Body of pancreas (tissue), 4 donors: ENCODE measurements at regions of chr6 and their contacts with region 1.

Region 1: DNA sequence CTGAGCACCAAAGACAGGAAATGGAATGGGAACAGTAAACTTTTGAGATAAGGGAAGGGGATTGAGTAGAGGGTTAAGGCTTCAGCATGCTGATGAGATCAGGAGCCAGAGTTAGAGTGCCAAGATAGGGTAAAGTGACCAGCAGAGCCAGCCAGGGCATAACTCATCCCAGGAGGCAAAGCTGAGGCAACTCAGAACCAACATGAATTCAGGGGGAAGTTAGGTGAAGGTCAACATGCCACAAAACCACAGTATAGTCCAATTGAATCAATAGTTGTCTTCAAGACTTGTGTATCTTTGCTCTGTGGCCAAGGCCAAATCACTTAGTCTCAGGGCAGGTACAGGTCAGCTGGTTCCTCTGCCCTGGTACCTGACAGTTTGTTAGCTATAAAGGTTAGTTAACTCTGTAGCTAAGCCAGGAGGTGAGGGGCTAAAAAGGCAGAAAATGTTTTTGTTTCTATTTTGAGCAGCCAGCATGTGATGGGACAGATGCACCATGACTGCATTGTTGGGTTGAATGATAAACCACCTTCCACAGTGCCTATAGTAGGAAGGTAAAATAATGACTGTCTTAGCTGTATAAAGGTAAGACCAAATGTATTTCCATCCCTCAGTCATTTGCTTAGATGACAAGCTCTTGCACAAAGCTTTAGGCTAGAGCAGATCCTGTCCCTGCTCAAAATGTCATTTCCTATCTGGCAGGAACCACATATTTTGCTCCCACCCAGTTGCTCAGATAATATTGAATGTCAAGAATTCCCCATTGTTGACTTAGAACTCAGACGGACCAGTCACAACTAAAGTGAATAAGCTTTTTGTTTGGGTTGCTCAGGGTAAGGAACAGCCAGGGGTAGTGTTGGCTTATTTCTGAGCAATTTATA is 15.8 kb downstream of the RNF8 start:
- DNase-seq: no peak
- ATAC-seq: no peak
- H3K4me3 ChIP-seq: no peak overlapping the region
- H3K27ac ChIP-seq: peak overlapping the region in 2 of 4 donors; percentile 31 to 54
- H3K4me1 ChIP-seq: peaks cover 35% of the 10 kb centered on the region
- H3K27me3 ChIP-seq: no peaks in the 10 kb centered on the region
- CTCF ChIP-seq: no peak
- POLR2A ChIP-seq: no peak

Region 2: GRCh38 chr6:37566111-37566949 is 196.8 kb after region 1 on chr6:
- intact Hi-C with region 1: loop called (anchors 10 kb)
- DNase-seq: peak; percentile 22 to 57 (median 42)
- ATAC-seq: peak; percentile 49
- H3K4me3 ChIP-seq: no peak overlapping the region
- H3K27ac ChIP-seq: no peak overlapping the region
- H3K4me1 ChIP-seq: peaks cover 8% of the 10 kb centered on the region
- H3K27me3 ChIP-seq: peaks cover 0 to 4% of the 10 kb centered on the region in 2 donors
- CTCF ChIP-seq: peak; percentile 63 to 80 (median 69)
- POLR2A ChIP-seq: no peak